Activated naive CD4-positive, alpha-beta T cell treated with anti-CD3 and anti-CD28 coated beads for 36 hours (primary cell): ENCODE measurements at regions of chr1 and their contacts with region 1.

Region 1: DNA sequence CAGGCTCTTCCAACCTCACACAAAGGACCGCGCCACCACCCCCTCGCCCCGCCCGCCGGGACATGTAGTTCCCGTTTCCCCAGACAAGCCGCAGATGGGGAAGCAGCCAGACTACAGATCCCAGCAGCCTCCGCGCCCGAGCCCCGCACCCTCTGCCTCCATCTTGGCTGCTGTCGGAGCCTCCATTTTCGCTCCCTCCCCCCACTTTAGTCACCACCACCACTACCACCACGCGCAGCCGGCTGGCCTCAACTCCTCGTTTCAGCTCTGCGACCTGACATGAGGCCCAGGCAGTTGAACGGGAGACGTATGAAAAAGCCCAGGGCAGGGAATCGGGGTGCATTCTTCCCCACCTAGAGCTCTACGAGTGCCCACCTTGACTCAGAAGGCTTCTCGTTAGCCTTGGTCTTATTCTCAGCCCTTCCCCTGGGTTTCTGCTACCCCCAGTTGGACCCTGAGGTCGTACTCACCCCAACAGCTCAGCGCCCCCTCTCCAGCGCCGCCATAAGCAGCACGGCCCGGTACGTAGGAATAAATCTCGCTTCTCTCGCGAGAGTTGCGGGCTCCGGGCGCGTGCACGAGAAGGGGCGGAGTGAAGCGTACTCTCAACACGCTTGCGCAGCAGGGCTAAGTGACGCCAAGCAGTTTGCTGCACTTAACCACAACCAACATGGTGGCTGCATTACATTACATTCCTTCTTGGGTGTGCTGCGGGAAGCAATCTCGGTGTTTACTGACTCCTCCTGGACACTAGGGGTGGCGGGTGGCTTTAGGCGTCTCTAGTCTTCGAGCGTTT is at the start of gene CSDE1:
- DNase-seq: peak; percentile 99
- H3K4me3 Mint-ChIP-seq: peak within 1 kb of the TSS; percentile 99
- H3K27ac Mint-ChIP-seq: peak within 1 kb of the TSS; percentile 100
- H3K4me1 Mint-ChIP-seq: peaks cover 50% of the 10 kb centered on the region
- H3K27me3 Mint-ChIP-seq: no peaks in the 10 kb centered on the region
- total RNA-seq, gene CSDE1: 533 to 579 TPM

Region 2: GRCh38 chr1:113871597-113872113 is 886.0 kb before region 1 on chr1 and contains the start of gene PTPN22:
- CTCF ChIA-PET with region 1: no interaction called
- intact Hi-C with region 1: loop called (anchors 2 kb)
- DNase-seq: peak; percentile 90
- H3K4me3 Mint-ChIP-seq: peak within 1 kb of the TSS; percentile 85
- H3K27ac Mint-ChIP-seq: peak within 1 kb of the TSS; percentile 98
- H3K4me1 Mint-ChIP-seq: peaks cover 64% of the 10 kb centered on the region
- H3K27me3 Mint-ChIP-seq: no peaks in the 10 kb centered on the region
- total RNA-seq, gene PTPN22: 43.9 to 50.9 TPM

Region 3: GRCh38 chr1:114467488-114467887 is 290.2 kb before region 1 on chr1:
- CTCF ChIA-PET with region 1: no interaction called
- intact Hi-C with region 1: loop called (anchors 5 kb)
- DNase-seq: no peak
- H3K4me3 Mint-ChIP-seq: no peak overlapping the region
- H3K27ac Mint-ChIP-seq: no peak overlapping the region
- H3K4me1 Mint-ChIP-seq: peaks cover 45% of the 10 kb centered on the region
- H3K27me3 Mint-ChIP-seq: no peaks in the 10 kb centered on the region

Region 4: GRCh38 chr1:114670083-114671010 is 87.3 kb before region 1 on chr1:
- CTCF ChIA-PET with region 1: no interaction called
- intact Hi-C with region 1: loop called (anchors 1 kb)
- DNase-seq: peak; percentile 87
- H3K4me3 Mint-ChIP-seq: peak overlapping the region; percentile 87
- H3K27ac Mint-ChIP-seq: no peak overlapping the region
- H3K4me1 Mint-ChIP-seq: peaks cover 4% of the 10 kb centered on the region
- H3K27me3 Mint-ChIP-seq: peaks cover 1% of the 10 kb centered on the region

Region 5: DNA sequence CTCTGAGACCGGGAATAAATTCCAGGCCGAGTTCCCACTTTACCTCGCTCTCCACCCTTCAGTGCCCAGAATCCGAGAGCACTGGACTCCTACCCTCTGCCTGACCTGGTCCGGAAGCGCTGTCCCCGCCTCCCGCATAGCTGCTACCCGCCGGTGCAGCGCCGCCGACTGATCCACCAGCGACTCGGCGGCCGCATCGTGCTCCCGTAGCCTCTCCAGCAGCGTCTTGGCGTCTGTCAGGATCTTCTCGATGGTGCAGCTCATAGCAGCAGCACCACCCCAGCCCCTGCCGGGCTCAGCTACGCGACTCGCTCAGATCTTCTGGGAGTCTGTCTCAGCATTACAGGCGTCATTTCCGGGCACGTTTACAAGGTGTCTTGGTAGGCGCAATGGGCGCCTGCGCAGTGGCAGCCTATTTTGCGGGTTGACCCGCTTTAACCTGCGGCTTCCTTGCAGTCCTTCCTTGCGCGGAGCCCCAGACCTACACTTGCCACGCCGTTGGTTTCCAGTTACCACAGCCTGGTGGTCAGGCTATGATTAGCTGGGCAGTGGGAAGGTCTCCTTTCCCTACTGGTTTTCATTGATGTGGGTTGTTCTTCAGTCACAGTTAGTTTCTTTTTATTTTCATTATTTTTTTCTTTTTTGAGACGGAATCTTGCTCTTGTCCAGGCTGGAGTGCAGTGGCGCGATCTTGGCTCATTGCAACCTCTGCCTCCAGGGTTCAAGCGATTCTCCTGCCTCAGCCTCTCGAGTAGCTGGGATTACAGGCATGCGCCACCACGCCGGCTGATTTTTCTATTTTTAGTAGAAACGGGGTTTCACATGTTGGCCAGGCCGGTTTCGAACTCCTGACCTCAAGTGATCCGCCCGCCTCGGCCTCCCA is 22.9 kb after region 1 on chr1 and contains the start of gene SIKE1:
- CTCF ChIA-PET with region 1: no interaction called
- intact Hi-C with region 1: loop called (anchors 1 kb)
- DNase-seq: peak; percentile 97
- H3K4me3 Mint-ChIP-seq: peak within 1 kb of the TSS; percentile 100
- H3K27ac Mint-ChIP-seq: peak within 1 kb of the TSS; percentile 97
- H3K4me1 Mint-ChIP-seq: peaks cover 24% of the 10 kb centered on the region
- H3K27me3 Mint-ChIP-seq: no peaks in the 10 kb centered on the region
- total RNA-seq, gene SIKE1: 60.2 to 60.6 TPM

Region 6: GRCh38 chr1:115289940-115290339 is 532.3 kb after region 1 on chr1:
- CTCF ChIA-PET with region 1: no interaction called
- intact Hi-C with region 1: no loop called
- DNase-seq: no peak
- H3K4me3 Mint-ChIP-seq: no peak overlapping the region
- H3K27ac Mint-ChIP-seq: no peak overlapping the region
- H3K4me1 Mint-ChIP-seq: no peaks in the 10 kb centered on the region
- H3K27me3 Mint-ChIP-seq: peaks cover 7% of the 10 kb centered on the region

Region 7: GRCh38 chr1:116372587-116373444 is 1615.2 kb after region 1 on chr1 and contains the start of gene ATP1A1:
- CTCF ChIA-PET with region 1: no interaction called
- intact Hi-C with region 1: loop called (anchors 2 kb)
- DNase-seq: peak; percentile 98
- H3K4me3 Mint-ChIP-seq: peak within 1 kb of the TSS; percentile 92
- H3K27ac Mint-ChIP-seq: peak within 1 kb of the TSS; percentile 95
- H3K4me1 Mint-ChIP-seq: peaks cover 30% of the 10 kb centered on the region
- H3K27me3 Mint-ChIP-seq: no peaks in the 10 kb centered on the region
- total RNA-seq, gene ATP1A1: 360 to 370 TPM